WTC11 (cell line): ENCODE measurements at regions of chr10 and their contacts with region 1.

Region 1: DNA sequence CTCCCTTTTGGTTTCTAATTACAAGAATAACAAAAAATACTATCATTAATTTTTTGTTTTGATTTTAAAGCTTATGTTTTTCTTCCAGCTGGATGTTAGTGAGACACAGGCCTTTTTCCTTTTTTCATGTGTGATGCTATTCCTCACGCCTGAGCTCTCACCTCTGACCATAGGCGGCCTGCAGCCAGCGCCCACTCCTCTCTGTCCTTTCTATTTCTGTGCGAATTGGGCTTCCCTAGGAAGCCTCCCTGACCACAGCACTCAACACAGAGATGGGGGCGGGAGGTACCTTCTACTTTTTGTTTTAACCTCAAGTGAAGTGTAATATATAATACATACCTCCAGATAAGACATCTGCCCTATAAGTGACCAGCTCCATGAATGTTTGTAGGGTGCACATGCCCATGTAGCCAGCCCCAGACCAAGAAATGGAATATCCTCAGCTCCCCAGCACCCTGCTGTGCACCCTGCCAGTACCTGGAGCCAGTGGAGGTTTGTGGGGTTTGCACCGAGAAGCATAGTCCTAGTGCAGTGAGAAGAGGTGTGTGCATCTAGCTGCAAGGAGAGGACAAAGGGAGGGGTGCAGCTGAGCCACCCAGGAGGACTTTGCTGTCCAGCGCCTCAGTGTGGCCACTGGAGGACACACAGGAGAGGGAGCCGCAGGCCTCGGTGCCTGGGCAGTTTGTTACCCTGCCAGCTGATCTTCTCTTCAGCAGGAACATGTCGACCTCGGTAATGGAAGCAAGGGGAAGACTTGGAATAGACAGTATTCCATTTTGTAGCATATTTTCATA is 38.5 kb downstream of the BNIP3 start:
- DNase-seq: peak; percentile 72
- ATAC-seq: peak; percentile 96
- H3K4me3 Mint-ChIP-seq: no peak overlapping the region
- H3K27ac Mint-ChIP-seq: 0 out of 2 replicates have a peak overlapping the region, but pooled peaks have one; percentile 29
- H3K4me1 Mint-ChIP-seq: no peaks in the 10 kb centered on the region
- H3K27me3 Mint-ChIP-seq: no peaks in the 10 kb centered on the region
- CTCF ChIP-seq: no peak; the same call in 1 of the 2 replicates

Region 2: DNA sequence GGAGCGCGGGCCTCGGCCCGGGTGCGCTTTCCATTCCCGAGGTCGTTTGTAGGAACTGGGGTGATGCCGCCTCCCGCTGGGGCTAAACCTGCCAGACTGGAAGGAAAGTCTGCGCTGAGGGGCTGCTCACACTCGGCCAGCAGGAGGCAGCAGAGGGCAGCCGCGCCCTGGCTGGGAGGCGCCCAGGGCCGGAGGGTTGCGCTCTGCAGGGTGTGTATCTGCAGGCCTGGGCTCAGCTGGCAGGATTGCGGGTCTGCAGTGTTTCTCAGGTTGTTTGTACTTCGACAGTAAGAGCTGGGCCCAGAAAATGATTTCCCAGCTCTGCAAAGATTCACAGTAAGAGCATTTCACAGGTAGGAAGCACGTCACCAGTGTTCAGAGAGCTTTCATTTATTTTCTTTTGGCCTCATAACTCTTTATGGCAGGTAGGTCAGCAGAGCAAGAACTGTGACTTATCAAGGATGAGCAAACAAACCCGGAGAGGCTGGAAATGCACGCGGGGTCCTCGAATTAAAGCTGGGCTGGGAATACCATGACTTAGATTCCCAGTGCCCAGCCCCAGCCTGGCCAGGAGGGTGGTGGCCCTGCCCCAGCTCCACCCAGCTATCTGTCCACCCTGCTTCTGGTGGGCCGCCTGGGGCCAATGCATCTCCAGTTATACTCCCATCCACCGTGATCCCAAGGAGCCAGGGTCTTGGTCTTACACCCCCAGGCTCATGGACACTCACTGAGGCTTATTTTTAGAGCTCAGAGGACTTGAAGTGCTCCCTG is 57.6 kb before region 1 on chr10:
- CTCF ChIA-PET with region 1: interaction called, 16 read pairs
- POLR2A ChIA-PET with region 1: no interaction called
- DNase-seq: peak; percentile 88
- ATAC-seq: peak; percentile 99
- H3K4me3 Mint-ChIP-seq: no peak overlapping the region
- H3K27ac Mint-ChIP-seq: no peak overlapping the region
- H3K4me1 Mint-ChIP-seq: peaks cover 7% of the 10 kb centered on the region
- H3K27me3 Mint-ChIP-seq: no peaks in the 10 kb centered on the region
- CTCF ChIP-seq: peak; percentile 78

Region 3: DNA sequence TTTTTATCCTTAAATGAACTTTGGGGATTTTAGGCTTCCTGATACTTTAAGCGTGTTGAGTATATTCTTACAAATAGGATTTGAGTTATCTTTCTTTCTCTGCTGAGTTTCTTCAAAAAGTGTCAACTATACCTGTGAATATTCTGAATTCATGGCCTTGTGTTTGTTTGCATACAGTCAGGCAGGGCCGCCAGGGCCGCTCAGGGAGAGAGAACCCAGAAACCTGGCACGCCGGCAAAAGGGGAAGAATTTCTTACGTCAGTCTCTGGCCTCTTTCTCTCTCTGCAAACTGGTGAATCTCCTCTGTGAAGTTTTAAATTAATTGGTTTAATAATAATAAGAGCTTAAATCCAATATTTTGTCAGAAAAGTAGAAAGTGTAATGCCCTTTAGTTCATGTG is 67.8 kb after region 1 on chr10:
- CTCF ChIA-PET with region 1: no interaction called
- POLR2A ChIA-PET with region 1: no interaction called
- DNase-seq: no peak
- ATAC-seq: no peak
- H3K4me3 Mint-ChIP-seq: peak overlapping the region; percentile 27; the same call in 1 of the 2 replicates
- H3K27ac Mint-ChIP-seq: peak overlapping the region; percentile 48
- H3K4me1 Mint-ChIP-seq: peaks cover 71% of the 10 kb centered on the region
- H3K27me3 Mint-ChIP-seq: no peaks in the 10 kb centered on the region
- CTCF ChIP-seq: no peak